ENCODE measurements at regions of chr10 and their contacts with region 1.

Region 1: GRCh38 chr10:4849555-4850242 is 23.7 kb downstream of the AKR1E2 start:
- DNase-seq: peak; percentile 81 to 91
- H3K4me3 ChIP-seq: no peak overlapping the region
- H3K27ac ChIP-seq: peak overlapping the region; percentile 88
- H3K4me1 ChIP-seq: peaks cover 41% of the 10 kb centered on the region
- H3K27me3 ChIP-seq: no peaks in the 10 kb centered on the region
- CTCF ChIP-seq: peak; percentile 93

Region 2: DNA sequence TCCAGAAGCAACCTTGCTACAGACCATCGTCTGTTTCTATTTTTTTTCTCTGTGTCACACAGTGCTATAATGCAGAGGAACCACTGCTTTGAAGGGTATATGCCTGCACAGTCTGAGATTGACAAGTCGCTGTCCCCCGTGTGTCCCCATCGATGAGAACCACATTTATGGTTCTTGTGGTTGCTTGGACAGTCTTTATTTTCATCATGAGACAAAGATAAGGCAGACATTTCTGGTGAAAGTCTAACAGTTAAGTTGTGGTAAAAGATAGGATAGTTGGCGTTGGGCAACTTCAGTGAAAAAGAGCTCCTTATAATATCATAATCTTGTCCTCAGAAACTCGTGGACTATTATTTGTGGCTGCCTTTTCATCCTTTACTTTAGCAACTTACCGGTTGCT is 30.0 kb before region 1 on chr10:
- CTCF ChIA-PET with region 1: interaction called, 5 read pairs
- POLR2A ChIA-PET with region 1: no interaction called
- intact Hi-C with region 1: loop called (anchors 1 kb)
- DNase-seq: no peak
- H3K4me3 ChIP-seq: no peak overlapping the region
- H3K27ac ChIP-seq: no peak overlapping the region
- H3K4me1 ChIP-seq: no peaks in the 10 kb centered on the region; the same call in 1 of the 2 replicates
- H3K27me3 ChIP-seq: no peaks in the 10 kb centered on the region
- CTCF ChIP-seq: no peak

Region 3: DNA sequence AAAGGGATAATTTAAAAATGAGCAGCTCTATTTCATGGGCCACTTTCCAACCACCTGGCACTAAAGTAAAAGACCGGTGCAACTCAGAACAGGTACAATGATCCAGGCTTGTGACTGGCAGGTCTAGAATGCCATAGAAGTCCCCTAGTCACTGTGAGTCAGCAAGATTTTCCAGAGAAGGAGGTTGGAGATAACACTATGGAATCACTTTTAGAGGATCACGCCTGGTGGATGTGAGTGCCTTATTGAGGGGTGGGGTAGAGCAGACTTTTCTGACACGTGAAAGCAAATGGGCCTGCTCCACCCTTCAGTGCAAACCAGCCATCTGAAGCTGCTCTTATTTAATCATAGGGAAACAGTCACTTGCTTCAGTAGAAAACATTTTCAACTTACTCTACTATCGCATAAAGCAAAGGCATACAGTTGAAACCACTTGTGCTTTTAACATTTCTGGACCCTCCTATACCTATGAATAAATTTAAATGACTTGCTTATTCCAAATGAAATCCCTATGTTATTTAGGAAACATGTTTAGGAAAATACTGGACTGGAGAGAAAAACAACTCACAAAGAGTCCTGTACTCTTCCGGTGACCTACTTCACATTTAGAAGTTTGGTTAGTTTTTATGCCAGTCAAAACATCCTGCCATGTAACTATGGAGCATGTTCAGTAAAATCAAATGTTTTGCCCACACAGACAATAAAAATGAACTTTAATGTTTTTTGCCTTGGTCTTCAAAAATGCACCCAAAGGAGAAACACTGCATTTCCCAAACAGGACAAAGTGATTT is 92.0 kb after region 1 on chr10:
- CTCF ChIA-PET with region 1: interaction called, 4 read pairs
- POLR2A ChIA-PET with region 1: interaction called, 5 read pairs
- intact Hi-C with region 1: loop called (anchors 1 kb)
- DNase-seq: peak; percentile 81 to 85
- H3K4me3 ChIP-seq: no peak overlapping the region
- H3K27ac ChIP-seq: peak overlapping the region; percentile 100
- H3K4me1 ChIP-seq: peaks cover 77% of the 10 kb centered on the region
- H3K27me3 ChIP-seq: no peaks in the 10 kb centered on the region
- CTCF ChIP-seq: no peak

Region 4: GRCh38 chr10:5094265-5095205 is 244.8 kb after region 1 on chr10 and contains the start of gene AKR1C3:
- CTCF ChIA-PET with region 1: interaction called, 3 read pairs
- POLR2A ChIA-PET with region 1: no interaction called
- intact Hi-C with region 1: loop called (anchors 1 kb)
- DNase-seq: peak; percentile 37 to 74
- H3K4me3 ChIP-seq: peak within 1 kb of the TSS; percentile 97
- H3K27ac ChIP-seq: peak within 1 kb of the TSS; percentile 99
- H3K4me1 ChIP-seq: peaks cover 34% of the 10 kb centered on the region
- H3K27me3 ChIP-seq: no peaks in the 10 kb centered on the region; the same call in 1 of the 2 replicates
- CTCF ChIP-seq: peak; percentile 81
- total RNA-seq, gene AKR1C3: 1,870 and 1,886 TPM in 2 replicates

Region 5: DNA sequence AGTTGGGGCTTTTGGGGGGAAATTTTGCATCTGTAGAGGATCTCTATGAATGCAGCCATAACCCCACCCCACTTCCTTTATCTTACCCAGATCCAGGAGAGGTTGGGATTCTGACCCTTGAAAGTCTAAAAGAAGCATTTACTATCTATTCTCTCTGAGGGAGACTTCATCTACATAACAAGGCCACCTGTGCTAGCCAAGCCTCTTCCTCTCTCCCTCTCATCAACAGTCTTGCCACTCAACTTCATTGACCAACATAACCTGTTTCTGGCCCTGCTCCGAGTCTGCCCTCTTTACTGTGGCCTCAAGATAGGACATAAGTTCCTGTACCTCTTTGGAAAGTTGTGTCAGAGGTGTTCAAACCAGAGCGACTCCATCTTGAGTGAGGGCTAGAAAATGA is 535.5 kb after region 1 on chr10:
- CTCF ChIA-PET with region 1: interaction called, 6 read pairs
- POLR2A ChIA-PET with region 1: no interaction called
- intact Hi-C with region 1: loop called (anchors 1 kb)
- DNase-seq: no peak
- H3K4me3 ChIP-seq: no peak overlapping the region
- H3K27ac ChIP-seq: no peak overlapping the region
- H3K4me1 ChIP-seq: no peaks in the 10 kb centered on the region
- H3K27me3 ChIP-seq: no peaks in the 10 kb centered on the region
- CTCF ChIP-seq: no peak

Region 6: GRCh38 chr10:5446390-5446926 is 596.8 kb after region 1 on chr10:
- CTCF ChIA-PET with region 1: no interaction called
- POLR2A ChIA-PET with region 1: no interaction called
- intact Hi-C with region 1: loop called (anchors 5 kb)
- DNase-seq: peak; percentile 87 to 95
- H3K4me3 ChIP-seq: peak overlapping the region; percentile 91
- H3K27ac ChIP-seq: peak overlapping the region; percentile 95
- H3K4me1 ChIP-seq: peaks cover 38% of the 10 kb centered on the region
- H3K27me3 ChIP-seq: no peaks in the 10 kb centered on the region
- CTCF ChIP-seq: no peak

Measured in PC-9 (cell line).